ENCODE measurements at regions of chr3 and their contacts with region 1.

Region 1: GRCh38 chr3:172262991-172263608 is 185.2 kb downstream of the GHSR start:
- DNase-seq: no peak
- H3K4me3 ChIP-seq: no peak overlapping the region
- H3K27ac ChIP-seq: peak overlapping the region; percentile 94
- H3K4me1 ChIP-seq: peaks cover 58% of the 10 kb centered on the region
- H3K27me3 ChIP-seq: no peaks in the 10 kb centered on the region
- CTCF ChIP-seq: no peak

Region 2: GRCh38 chr3:172274906-172275305 is 11.8 kb after region 1 on chr3:
- CTCF ChIA-PET with region 1: interaction called, 15 read pairs
- POLR2A ChIA-PET with region 1: no interaction called
- intact Hi-C with region 1: no loop called
- DNase-seq: no peak
- H3K4me3 ChIP-seq: no peak overlapping the region
- H3K27ac ChIP-seq: no peak overlapping the region
- H3K4me1 ChIP-seq: peaks cover 40% of the 10 kb centered on the region
- H3K27me3 ChIP-seq: no peaks in the 10 kb centered on the region
- CTCF ChIP-seq: no peak

Measured in PC-9 (cell line).